ENCODE measurements at regions of chr13 and their contacts with region 1.

Region 1: DNA sequence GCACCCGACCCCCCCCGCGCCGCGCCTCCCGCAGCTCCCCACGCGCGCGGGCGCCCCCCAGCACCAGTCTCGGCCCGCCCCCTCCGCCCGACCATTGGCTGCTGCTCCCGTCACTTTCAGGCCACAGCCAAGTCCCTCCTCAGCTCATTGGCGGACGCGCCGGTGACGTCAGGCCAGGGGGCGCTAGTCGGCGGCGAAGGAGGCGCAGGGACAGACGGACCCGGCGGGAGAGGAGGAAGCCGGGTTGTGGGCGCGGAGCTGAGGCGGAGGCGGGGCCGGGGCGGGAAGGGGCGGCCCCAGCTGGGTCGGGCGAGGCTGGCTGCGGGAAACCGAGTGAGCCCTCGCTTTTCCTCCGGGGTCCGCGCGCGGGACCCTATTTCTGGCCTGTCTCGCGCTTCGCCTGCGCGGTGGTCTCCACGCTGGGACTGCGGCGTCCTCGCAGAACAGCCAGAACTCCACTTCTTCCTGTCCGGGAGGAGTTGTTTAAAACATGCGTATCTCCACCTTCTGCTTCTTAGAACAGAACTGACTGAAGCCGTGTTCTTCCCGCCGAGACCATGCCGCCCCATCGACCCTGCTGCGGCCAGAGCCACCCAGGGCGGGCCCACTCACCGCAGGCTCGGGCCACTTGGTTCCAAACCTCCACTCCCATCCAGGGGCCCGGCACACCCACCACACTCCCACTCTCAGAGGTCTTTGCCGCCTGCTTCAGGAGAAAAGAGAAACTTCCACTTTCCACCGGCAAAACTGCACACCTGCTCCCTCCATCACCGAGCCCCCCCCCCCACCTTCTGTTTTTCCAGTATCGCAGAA is 459 bp upstream of the TMTC4 start:
- DNase-seq: peak; percentile 98 to 100 (median 100)
- ATAC-seq: peak; percentile 90
- H3K4me3 ChIP-seq: peak overlapping the region; percentile 94
- H3K4me3 Mint-ChIP-seq: peak overlapping the region; percentile 96
- H3K27ac ChIP-seq: peak overlapping the region; percentile 48 to 50
- H3K27ac Mint-ChIP-seq: peak overlapping the region; percentile 82
- H3K4me1 ChIP-seq: peaks cover 22% of the 10 kb centered on the region
- H3K4me1 Mint-ChIP-seq: peaks cover 36% of the 10 kb centered on the region
- H3K27me3 ChIP-seq: no peaks in the 10 kb centered on the region
- H3K27me3 Mint-ChIP-seq: no peaks in the 10 kb centered on the region
- CTCF ChIP-seq: peak; percentile 27

Region 2: GRCh38 chr13:99606324-99607066 is 1068.6 kb before region 1 on chr13:
- CTCF ChIA-PET with region 1: interaction called, 7 read pairs
- POLR2A ChIA-PET with region 1: interaction called, 5 read pairs
- intact Hi-C with region 1: loop called in 1 of 2 experiments (anchors 2 kb)
- DNase-seq: peak; percentile 85 to 97 (median 92)
- ATAC-seq: peak; percentile 88
- H3K4me3 ChIP-seq: peak within 1 kb of the TSS; percentile 73
- H3K4me3 Mint-ChIP-seq: peak within 1 kb of the TSS; percentile 96
- H3K27ac ChIP-seq: peak within 1 kb of the TSS; percentile 37 to 83
- H3K27ac Mint-ChIP-seq: peak within 1 kb of the TSS; percentile 91
- H3K4me1 ChIP-seq: peaks cover 32% of the 10 kb centered on the region
- H3K4me1 Mint-ChIP-seq: peaks cover 62% of the 10 kb centered on the region
- H3K27me3 ChIP-seq: no peaks in the 10 kb centered on the region
- H3K27me3 Mint-ChIP-seq: no peaks in the 10 kb centered on the region
- CTCF ChIP-seq: peak; percentile 4

Region 3: DNA sequence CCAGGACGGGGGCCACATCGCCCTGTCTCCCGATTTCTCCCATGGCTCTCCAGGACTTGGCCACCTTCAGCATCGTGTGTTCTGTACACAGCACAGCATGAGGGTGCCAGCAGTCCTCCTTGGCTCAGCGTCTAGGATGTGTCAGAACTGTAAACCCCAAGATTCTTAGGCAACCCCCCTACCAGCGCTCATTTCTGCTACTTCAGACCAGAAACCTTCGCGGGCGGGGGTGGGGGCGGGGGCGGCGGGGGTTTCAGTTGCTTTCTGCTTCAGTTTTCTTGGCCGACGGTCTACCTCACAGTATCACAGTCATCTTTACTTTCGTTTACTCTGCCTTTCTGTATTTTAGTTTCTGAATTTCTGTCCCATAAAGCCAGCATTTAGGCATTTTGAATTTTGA is 168.9 kb before region 1 on chr13:
- CTCF ChIA-PET with region 1: no interaction called
- POLR2A ChIA-PET with region 1: no interaction called
- intact Hi-C with region 1: no loop called
- DNase-seq: peak in 1 of 14 experiments; percentile 27
- ATAC-seq: no peak
- H3K4me3 ChIP-seq: peak overlapping the region; percentile 13
- H3K4me3 Mint-ChIP-seq: peak overlapping the region; percentile 66
- H3K27ac ChIP-seq: no peak overlapping the region
- H3K27ac Mint-ChIP-seq: no peak overlapping the region
- H3K4me1 ChIP-seq: peaks cover 10% of the 10 kb centered on the region
- H3K4me1 Mint-ChIP-seq: peaks cover 13% of the 10 kb centered on the region
- H3K27me3 ChIP-seq: no peaks in the 10 kb centered on the region
- H3K27me3 Mint-ChIP-seq: no peaks in the 10 kb centered on the region
- CTCF ChIP-seq: no peak

Region 4: DNA sequence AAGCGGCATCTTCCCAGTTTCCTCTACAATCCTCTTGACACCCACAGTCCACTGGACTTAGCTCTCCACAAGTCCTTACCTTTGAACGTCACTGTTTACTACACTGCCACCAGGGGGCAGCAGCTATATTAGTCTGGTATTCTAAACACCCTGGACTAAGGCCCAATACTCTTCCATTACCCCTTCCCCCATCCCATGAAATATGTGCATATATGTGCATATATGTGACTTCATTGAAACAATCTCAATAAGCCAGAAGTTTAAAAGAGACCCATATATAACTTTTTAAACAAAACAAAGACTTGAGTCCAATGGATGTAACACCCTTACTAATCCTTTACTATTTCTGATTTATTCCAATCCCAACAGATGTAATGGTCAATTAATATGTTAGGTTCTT is 101.9 kb before region 1 on chr13:
- CTCF ChIA-PET with region 1: interaction called, 4 read pairs
- POLR2A ChIA-PET with region 1: interaction called, 3 read pairs
- intact Hi-C with region 1: loop called in 1 of 2 experiments (anchors 5 kb)
- DNase-seq: peak; percentile 54 to 90 (median 71)
- ATAC-seq: peak; percentile 81
- H3K4me3 ChIP-seq: no peak overlapping the region
- H3K4me3 Mint-ChIP-seq: no peak overlapping the region
- H3K27ac ChIP-seq: no peak overlapping the region
- H3K27ac Mint-ChIP-seq: no peak overlapping the region
- H3K4me1 ChIP-seq: peaks cover 6% of the 10 kb centered on the region
- H3K4me1 Mint-ChIP-seq: peaks cover 13% of the 10 kb centered on the region
- H3K27me3 ChIP-seq: no peaks in the 10 kb centered on the region
- H3K27me3 Mint-ChIP-seq: no peaks in the 10 kb centered on the region
- CTCF ChIP-seq: peak; percentile 75

Region 5: GRCh38 chr13:100588331-100589177 is 86.5 kb before region 1 on chr13 and contains the start of gene GGACT:
- CTCF ChIA-PET with region 1: interaction called, 5 read pairs
- POLR2A ChIA-PET with region 1: interaction called, 22 read pairs
- intact Hi-C with region 1: loop called (anchors 2 kb)
- DNase-seq: peak; percentile 69 to 92 (median 86)
- ATAC-seq: peak; percentile 92
- H3K4me3 ChIP-seq: peak within 1 kb of the TSS; percentile 67
- H3K4me3 Mint-ChIP-seq: peak within 1 kb of the TSS; percentile 90
- H3K27ac ChIP-seq: peak within 1 kb of the TSS; percentile 72 to 79
- H3K27ac Mint-ChIP-seq: peak within 1 kb of the TSS; percentile 92
- H3K4me1 ChIP-seq: peaks cover 26% of the 10 kb centered on the region
- H3K4me1 Mint-ChIP-seq: peaks cover 51% of the 10 kb centered on the region
- H3K27me3 ChIP-seq: no peaks in the 10 kb centered on the region
- H3K27me3 Mint-ChIP-seq: no peaks in the 10 kb centered on the region
- CTCF ChIP-seq: peak; percentile 71
- total RNA-seq, gene GGACT: 2.4 to 2.9 TPM

Region 6: GRCh38 chr13:102394158-102395053 is 1719.4 kb after region 1 on chr13:
- CTCF ChIA-PET with region 1: no interaction called
- POLR2A ChIA-PET with region 1: no interaction called
- intact Hi-C with region 1: loop called in 1 of 2 experiments (anchors 10 kb)
- DNase-seq: peak; percentile 93 to 98 (median 96)
- ATAC-seq: peak; percentile 94
- H3K4me3 ChIP-seq: peak overlapping the region; percentile 80
- H3K4me3 Mint-ChIP-seq: peak overlapping the region; percentile 95
- H3K27ac ChIP-seq: peak overlapping the region in 1 of 2 donors; percentile 50
- H3K27ac Mint-ChIP-seq: peak overlapping the region; percentile 77
- H3K4me1 ChIP-seq: peaks cover 18% of the 10 kb centered on the region
- H3K4me1 Mint-ChIP-seq: peaks cover 19% of the 10 kb centered on the region
- H3K27me3 ChIP-seq: peaks cover 3 to 6% of the 10 kb centered on the region in 2 experiments
- H3K27me3 Mint-ChIP-seq: peaks cover 20% of the 10 kb centered on the region
- CTCF ChIP-seq: no peak

Measured in CD4-positive, alpha-beta T cell (primary cell).